MCF 10A (cell line): ENCODE measurements at regions of chr7 and their contacts with region 1.

Region 1: GRCh38 chr7:138865843-138866242 is 67.8 kb upstream of the ATP6V0A4 start:
- DNase-seq: no peak
- H3K4me3 Mint-ChIP-seq: no peak overlapping the region
- H3K27ac Mint-ChIP-seq: no peak overlapping the region
- H3K4me1 Mint-ChIP-seq: peaks cover 20% of the 10 kb centered on the region
- H3K27me3 Mint-ChIP-seq: no peaks in the 10 kb centered on the region
- CTCF ChIP-seq: peak; percentile 38

Region 2: DNA sequence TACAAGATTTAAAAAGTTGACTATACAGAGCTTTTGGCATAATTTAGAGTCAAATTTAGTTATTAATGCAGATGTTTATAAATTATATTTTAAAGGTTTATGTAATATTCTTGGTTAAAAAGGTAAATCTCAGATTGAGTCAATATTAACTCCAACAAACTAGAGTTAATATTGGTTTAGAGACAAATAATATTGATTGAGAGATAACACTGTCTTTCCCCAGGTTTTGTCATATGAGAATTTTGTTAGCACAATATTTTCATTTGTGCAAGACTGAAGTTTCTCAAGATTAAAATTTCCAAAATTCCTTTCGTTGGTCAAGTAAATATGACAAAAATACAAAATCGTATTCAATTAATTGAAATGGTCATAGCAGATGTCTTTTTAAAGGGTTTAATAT is 802.4 kb before region 1 on chr7:
- CTCF ChIA-PET with region 1: no interaction called
- POLR2A ChIA-PET with region 1: no interaction called
- intact Hi-C with region 1: no loop called
- DNase-seq: no peak
- H3K4me3 Mint-ChIP-seq: no peak overlapping the region
- H3K27ac Mint-ChIP-seq: no peak overlapping the region
- H3K4me1 Mint-ChIP-seq: no peaks in the 10 kb centered on the region
- H3K27me3 Mint-ChIP-seq: no peaks in the 10 kb centered on the region
- CTCF ChIP-seq: no peak

Region 3: DNA sequence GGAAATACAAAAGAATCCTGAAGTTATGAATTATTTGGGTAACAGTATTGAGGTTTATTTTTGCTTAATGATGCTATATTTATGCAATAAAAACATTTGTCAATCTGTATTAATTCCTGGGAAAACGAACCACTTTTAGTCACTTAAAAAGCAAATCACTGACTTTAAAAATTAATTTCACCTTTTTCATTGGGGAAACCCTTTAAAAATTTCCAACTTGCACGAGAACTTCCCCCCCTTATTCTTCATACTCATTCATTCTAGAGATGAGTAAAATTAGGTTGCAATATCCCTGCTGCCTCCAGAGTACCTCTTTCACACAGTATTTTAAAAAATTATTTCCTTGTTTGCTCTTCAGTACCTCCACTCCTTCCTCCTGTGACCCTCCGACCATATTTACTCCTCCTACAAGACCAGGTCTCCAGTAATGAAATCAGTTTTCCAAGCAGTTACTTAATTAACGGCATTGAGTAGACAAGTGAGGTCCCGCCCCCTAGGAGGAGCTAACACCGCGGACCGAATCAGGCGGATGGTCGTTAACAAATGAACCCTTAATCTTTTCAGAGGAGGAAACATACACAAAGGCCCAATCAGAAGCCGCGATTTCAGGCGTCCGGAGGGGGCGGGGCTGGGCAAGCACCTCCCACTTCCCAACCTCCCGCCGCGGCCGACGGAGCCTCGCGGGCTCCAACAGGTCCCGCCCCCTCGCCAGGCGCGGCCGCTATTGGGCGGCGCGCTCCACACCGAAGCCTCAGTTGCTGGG is 406.2 kb before region 1 on chr7:
- CTCF ChIA-PET with region 1: interaction called, 3 read pairs
- POLR2A ChIA-PET with region 1: no interaction called
- intact Hi-C with region 1: loop called (anchors 10 kb)
- DNase-seq: peak; percentile 97
- H3K4me3 Mint-ChIP-seq: peak overlapping the region; percentile 74
- H3K27ac Mint-ChIP-seq: peak overlapping the region; percentile 3
- H3K4me1 Mint-ChIP-seq: peaks cover 12% of the 10 kb centered on the region
- H3K27me3 Mint-ChIP-seq: no peaks in the 10 kb centered on the region
- CTCF ChIP-seq: peak; percentile 21

Region 4: GRCh38 chr7:138926241-138926612 is 60.4 kb after region 1 on chr7:
- CTCF ChIA-PET with region 1: no interaction called
- POLR2A ChIA-PET with region 1: no interaction called
- intact Hi-C with region 1: no loop called
- DNase-seq: no peak
- H3K4me3 Mint-ChIP-seq: no peak overlapping the region
- H3K27ac Mint-ChIP-seq: no peak overlapping the region
- H3K4me1 Mint-ChIP-seq: peaks cover 11% of the 10 kb centered on the region
- H3K27me3 Mint-ChIP-seq: no peaks in the 10 kb centered on the region
- CTCF ChIP-seq: no peak